ENCODE measurements at regions of chr1 and their contacts with region 1.

Region 1: DNA sequence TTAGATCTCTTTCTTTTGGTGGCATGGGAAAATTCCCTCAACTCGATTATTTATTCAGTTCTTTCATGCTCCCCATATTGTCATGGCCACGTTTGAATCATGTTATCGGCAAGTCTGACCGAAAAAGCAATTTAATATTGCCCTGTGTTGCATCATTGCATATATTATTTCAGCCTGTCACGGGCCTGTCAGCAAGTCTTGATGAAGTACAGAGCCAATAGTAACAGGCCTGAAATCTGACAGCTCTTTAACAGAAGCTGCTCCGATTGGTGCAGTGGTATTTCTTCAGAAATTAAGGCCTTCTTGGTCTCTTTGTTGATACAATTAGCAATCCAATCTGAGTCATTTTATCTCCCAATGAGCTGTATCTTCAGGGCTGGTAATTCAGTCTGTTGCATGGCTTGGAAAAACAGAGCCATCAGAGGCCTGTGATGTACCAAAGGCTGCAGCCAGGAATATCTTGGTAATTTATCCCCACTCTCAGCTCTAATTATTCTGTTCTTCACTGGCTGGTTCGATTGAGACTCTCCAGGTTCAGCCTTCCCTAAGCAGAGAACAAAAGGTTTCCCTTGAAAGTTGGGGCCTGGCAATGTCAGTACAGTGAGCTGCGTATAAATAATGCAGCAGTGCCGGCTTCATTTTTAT is 149.5 kb downstream of the FGGY start:
- DNase-seq: peak; percentile 45
- H3K4me3 Mint-ChIP-seq: no peak overlapping the region
- H3K27ac Mint-ChIP-seq: peak overlapping the region; percentile 94
- H3K4me1 Mint-ChIP-seq: peaks cover 50% of the 10 kb centered on the region
- H3K27me3 Mint-ChIP-seq: no peaks in the 10 kb centered on the region
- CTCF ChIP-seq: no peak

Region 2: DNA sequence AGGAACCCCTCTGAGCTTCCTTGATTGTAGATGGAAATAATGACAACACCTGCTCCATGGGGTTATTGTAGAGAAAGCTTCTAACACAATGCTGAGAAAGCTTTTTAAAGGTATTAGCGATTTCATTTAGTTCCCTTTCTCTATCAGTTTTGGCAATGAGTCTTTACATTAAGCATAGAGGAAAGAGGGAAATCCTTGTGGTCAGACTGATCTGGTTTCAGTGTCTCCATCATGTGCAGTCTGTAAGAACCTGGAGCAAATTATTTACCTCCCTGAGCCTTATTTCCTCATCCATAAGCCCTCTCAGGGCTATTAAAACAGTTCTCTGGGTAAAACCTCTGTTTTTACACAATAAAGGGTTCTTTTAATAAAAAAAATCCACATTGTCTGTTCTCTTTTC is 61.9 kb before region 1 on chr1:
- CTCF ChIA-PET with region 1: no interaction called
- POLR2A ChIA-PET with region 1: no interaction called
- intact Hi-C with region 1: no loop called
- DNase-seq: no peak
- H3K4me3 Mint-ChIP-seq: no peak overlapping the region
- H3K27ac Mint-ChIP-seq: no peak overlapping the region
- H3K4me1 Mint-ChIP-seq: peaks cover 5% of the 10 kb centered on the region
- H3K27me3 Mint-ChIP-seq: no peaks in the 10 kb centered on the region
- CTCF ChIP-seq: no peak

Region 3: GRCh38 chr1:59427155-59427554 is 19.2 kb before region 1 on chr1:
- CTCF ChIA-PET with region 1: interaction called, 3 read pairs
- POLR2A ChIA-PET with region 1: interaction called, 50 read pairs
- intact Hi-C with region 1: no loop called
- DNase-seq: peak; percentile 70
- H3K4me3 Mint-ChIP-seq: peak overlapping the region; percentile 35
- H3K27ac Mint-ChIP-seq: peak overlapping the region; percentile 71
- H3K4me1 Mint-ChIP-seq: peaks cover 38% of the 10 kb centered on the region
- H3K27me3 Mint-ChIP-seq: no peaks in the 10 kb centered on the region
- CTCF ChIP-seq: no peak

Region 4: DNA sequence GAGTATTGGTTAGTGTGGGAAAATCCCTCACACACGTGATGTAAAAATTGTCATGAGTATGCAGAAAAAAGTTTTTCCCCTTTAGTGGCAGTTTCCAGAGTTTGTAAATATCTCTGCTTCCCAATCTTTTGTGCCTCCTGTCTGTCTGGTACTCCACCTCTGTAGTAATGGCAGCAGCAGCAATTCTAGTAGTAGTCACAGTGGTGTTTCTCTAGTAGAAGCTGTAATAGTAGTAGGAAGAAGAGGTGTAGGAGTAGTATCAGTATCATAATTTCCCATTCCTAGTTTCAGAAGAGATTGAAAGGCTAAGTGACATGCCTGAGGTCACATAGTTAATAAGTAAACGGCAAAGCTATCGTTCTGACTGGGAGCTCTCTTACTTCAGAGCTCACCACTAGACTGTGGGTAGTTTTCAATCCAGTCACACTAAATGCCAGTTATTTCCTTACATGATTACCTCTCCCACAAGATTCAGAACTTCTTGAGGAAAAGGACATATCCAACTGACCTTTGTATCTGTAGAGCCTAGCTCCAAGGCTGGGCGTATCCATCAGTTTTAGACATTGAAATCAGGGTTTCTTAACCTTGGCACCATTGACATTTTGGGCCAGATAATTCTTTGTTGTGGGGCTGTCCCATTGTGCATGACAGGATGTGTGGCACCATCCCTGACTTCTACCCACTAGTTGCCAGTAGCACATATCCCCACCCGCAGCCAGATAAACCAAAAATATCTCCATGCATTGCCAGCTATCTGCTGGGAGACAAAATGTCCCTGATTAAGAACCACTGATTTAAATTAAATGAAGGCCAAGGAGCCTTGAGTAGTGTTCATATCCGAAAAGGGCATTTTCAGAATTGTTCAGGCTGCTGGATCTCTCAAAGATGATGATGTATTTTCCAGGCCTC is 13.6 kb before region 1 on chr1:
- CTCF ChIA-PET with region 1: interaction called, 3 read pairs
- POLR2A ChIA-PET with region 1: interaction called, 50 read pairs
- intact Hi-C with region 1: no loop called
- DNase-seq: no peak
- H3K4me3 Mint-ChIP-seq: no peak overlapping the region
- H3K27ac Mint-ChIP-seq: no peak overlapping the region
- H3K4me1 Mint-ChIP-seq: peaks cover 30% of the 10 kb centered on the region
- H3K27me3 Mint-ChIP-seq: no peaks in the 10 kb centered on the region
- CTCF ChIP-seq: no peak

Region 5: GRCh38 chr1:59498640-59499039 is 52.3 kb after region 1 on chr1:
- CTCF ChIA-PET with region 1: interaction called, 3 read pairs
- POLR2A ChIA-PET with region 1: interaction called, 10 read pairs
- intact Hi-C with region 1: no loop called
- DNase-seq: peak; percentile 35
- H3K4me3 Mint-ChIP-seq: no peak overlapping the region
- H3K27ac Mint-ChIP-seq: peak overlapping the region; percentile 90
- H3K4me1 Mint-ChIP-seq: peaks cover 31% of the 10 kb centered on the region
- H3K27me3 Mint-ChIP-seq: no peaks in the 10 kb centered on the region
- CTCF ChIP-seq: no peak

Region 6: GRCh38 chr1:59678493-59679228 is 232.3 kb after region 1 on chr1:
- CTCF ChIA-PET with region 1: no interaction called
- POLR2A ChIA-PET with region 1: interaction called, 7 read pairs
- intact Hi-C with region 1: loop called (anchors 10 kb)
- DNase-seq: peak; percentile 78
- H3K4me3 Mint-ChIP-seq: no peak overlapping the region
- H3K27ac Mint-ChIP-seq: peak overlapping the region; percentile 69
- H3K4me1 Mint-ChIP-seq: peaks cover 33% of the 10 kb centered on the region
- H3K27me3 Mint-ChIP-seq: no peaks in the 10 kb centered on the region
- CTCF ChIP-seq: no peak

Measured in MCF 10A (cell line).